Prostate gland (tissue), 2 donors: ENCODE measurements at regions of chr20 and their contacts with region 1.

Region 1: GRCh38 chr20:45857114-45857881 is at the starts of genes ACOT8 and ZSWIM3:
- DNase-seq: peak; percentile 100
- H3K4me3 ChIP-seq: peak within 1 kb of the TSS; percentile 60 to 73
- H3K27ac ChIP-seq: peak within 1 kb of the TSS; percentile 65 to 70
- H3K4me1 ChIP-seq: peaks cover 14% of the 10 kb centered on the region
- H3K27me3 ChIP-seq: no peaks in the 10 kb centered on the region
- CTCF ChIP-seq: peak in 1 of 4 experiments; percentile 3
- POLR2A ChIP-seq: peak; percentile 39
- total RNA-seq, gene ACOT8: 57.4 to 68.1 TPM
- total RNA-seq, gene ZSWIM3: 4.3 to 11.9 TPM

Region 2: GRCh38 chr20:45823949-45824835 is 33.1 kb before region 1 on chr20:
- intact Hi-C with region 1: loop called (anchors 5 kb)
- DNase-seq: peak; percentile 13
- H3K4me3 ChIP-seq: no peak overlapping the region
- H3K27ac ChIP-seq: no peak overlapping the region
- H3K4me1 ChIP-seq: no peaks in the 10 kb centered on the region
- H3K27me3 ChIP-seq: no peaks in the 10 kb centered on the region
- CTCF ChIP-seq: peak in 2 of 4 experiments; percentile 33 to 46
- POLR2A ChIP-seq: no peak

Region 3: GRCh38 chr20:46485431-46485830 is 628.1 kb after region 1 on chr20:
- intact Hi-C with region 1: no loop called
- DNase-seq: peak; percentile 17
- H3K4me3 ChIP-seq: peak overlapping the region in 1 of 2 donors; percentile 26
- H3K27ac ChIP-seq: peak overlapping the region; percentile 48 to 73
- H3K4me1 ChIP-seq: no peaks in the 10 kb centered on the region
- H3K27me3 ChIP-seq: no peaks in the 10 kb centered on the region
- CTCF ChIP-seq: no peak
- POLR2A ChIP-seq: no peak